HEK293 (cell line): ENCODE measurements at regions of chr12 and their contacts with region 1.

Region 1: GRCh38 chr12:6039894-6040568 is 84.4 kb downstream of the VWF start:
- H3K4me3 ChIP-seq: no peak overlapping the region
- H3K27ac ChIP-seq: no peak overlapping the region
- H3K4me1 ChIP-seq: no peaks in the 10 kb centered on the region
- CTCF ChIP-seq: peak; percentile 81

Region 2: GRCh38 chr12:5768581-5769196 is 271.3 kb before region 1 on chr12:
- CTCF ChIA-PET with region 1: no interaction called
- POLR2A ChIA-PET with region 1: no interaction called
- H3K4me3 ChIP-seq: no peak overlapping the region
- H3K27ac ChIP-seq: no peak overlapping the region
- H3K4me1 ChIP-seq: no peaks in the 10 kb centered on the region
- CTCF ChIP-seq: no peak

Region 3: DNA sequence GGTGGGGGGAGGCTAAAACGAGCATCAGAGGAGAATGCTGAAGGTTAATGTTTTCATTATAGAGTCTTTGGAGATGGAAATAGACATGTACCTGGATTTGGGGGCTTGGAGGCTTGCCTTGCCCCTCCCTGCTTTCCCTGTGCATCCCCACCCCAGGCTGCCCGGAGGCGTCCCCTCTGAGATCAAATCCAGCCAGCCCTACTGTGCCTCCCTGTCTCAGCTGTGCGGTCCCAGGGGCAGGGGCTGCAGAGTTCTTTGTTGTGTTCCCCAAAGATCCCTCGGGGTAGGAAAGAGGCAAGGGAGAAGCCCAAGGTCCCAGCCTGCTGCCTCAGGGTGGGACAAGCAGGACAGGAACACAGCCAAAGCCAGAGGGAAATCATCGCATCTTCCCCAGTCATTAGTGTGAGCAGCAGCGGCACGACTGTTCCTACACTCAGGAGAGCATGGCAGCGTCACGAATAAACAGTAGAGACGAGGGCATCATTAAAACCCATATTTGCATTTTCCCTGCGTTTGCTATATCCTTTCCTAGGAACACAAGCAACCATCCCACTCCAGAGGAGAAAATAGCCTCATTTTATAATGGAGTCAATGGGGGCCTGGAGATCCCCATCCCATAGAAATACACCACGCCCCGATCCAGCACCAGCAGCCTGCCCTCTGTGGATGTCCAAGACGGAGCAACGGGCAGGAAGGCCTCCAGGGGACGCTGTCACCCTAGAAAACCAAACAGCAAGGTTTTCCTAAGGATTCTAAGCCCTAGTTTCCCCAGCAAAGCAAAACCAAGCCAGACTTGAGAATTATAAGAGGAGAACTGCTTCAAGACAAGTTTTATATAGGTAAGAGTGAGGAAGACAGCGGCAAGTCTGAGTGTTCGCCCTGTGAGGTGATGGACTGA is 127.3 kb before region 1 on chr12:
- CTCF ChIA-PET with region 1: interaction called, 15 read pairs
- POLR2A ChIA-PET with region 1: no interaction called
- H3K4me3 ChIP-seq: no peak overlapping the region
- H3K27ac ChIP-seq: no peak overlapping the region
- H3K4me1 ChIP-seq: no peaks in the 10 kb centered on the region
- CTCF ChIP-seq: no peak

Region 4: DNA sequence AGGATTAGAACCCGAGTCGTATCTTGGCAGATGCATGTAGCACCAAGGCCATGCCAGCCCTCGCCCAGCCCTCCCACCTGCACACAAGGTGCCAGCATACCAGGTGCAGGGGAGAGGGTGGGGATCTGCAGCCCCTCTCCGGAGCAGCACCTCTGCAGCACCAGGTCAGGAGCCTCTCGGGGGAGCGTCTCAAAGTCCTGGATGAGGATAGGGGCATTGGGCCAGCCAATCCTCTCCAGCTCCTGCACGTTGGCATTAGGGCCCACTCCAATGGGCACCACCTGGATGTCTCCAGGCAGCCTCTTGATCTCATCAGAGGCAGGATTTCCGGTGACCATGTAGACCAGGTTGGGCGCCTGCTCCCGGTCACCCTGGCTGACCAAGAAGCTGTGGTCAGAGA is 21.8 kb before region 1 on chr12:
- CTCF ChIA-PET with region 1: interaction called, 15 read pairs
- POLR2A ChIA-PET with region 1: no interaction called
- H3K4me3 ChIP-seq: no peak overlapping the region
- H3K27ac ChIP-seq: no peak overlapping the region
- H3K4me1 ChIP-seq: no peaks in the 10 kb centered on the region
- CTCF ChIP-seq: no peak

Region 5: GRCh38 chr12:6056406-6057240 is 16.6 kb after region 1 on chr12:
- CTCF ChIA-PET with region 1: interaction called, 25 read pairs
- POLR2A ChIA-PET with region 1: no interaction called
- H3K4me3 ChIP-seq: no peak overlapping the region
- H3K27ac ChIP-seq: no peak overlapping the region
- H3K4me1 ChIP-seq: no peaks in the 10 kb centered on the region
- CTCF ChIP-seq: no peak

Region 6: DNA sequence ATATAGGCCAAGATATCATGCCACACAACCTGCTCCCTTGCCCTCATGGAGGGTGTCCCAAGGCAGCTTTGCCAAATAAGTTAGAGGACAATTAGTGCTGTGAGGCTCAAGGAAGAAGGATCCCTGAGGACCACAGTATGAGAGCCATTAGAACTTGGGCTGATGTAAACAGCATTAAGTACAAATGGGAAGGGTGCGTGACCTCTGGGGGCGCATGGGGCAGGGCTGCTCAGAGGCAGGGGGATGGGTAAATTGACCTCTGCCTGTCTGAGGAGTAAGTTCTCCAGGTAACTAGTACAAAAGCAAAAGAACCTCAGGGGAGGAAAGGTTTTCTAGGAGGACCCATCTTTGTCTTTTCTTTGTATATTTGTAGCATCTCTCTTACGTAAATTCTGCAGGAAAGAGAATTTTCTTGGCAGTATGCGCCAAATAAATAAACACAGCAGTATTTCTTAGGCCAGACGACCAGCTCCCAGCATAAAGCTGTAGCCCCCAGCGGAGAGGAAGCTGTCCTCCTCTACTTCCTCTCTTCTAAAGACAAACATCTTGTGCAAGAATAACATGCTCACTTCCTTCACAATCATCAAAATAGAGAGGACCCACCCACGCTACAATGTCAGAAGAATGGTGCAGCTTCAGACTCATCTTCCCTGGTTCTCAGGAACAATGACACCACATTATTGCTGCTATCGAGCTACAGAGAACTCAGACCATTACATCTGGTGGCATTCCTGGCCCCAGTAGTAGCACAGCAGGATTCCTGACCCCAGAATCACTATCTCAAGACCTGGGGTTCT is 100.8 kb after region 1 on chr12:
- CTCF ChIA-PET with region 1: no interaction called
- POLR2A ChIA-PET with region 1: no interaction called
- H3K4me3 ChIP-seq: no peak overlapping the region
- H3K27ac ChIP-seq: no peak overlapping the region
- H3K4me1 ChIP-seq: no peaks in the 10 kb centered on the region
- CTCF ChIP-seq: no peak